ENCODE measurements at regions of chr2 and their contacts with region 1.

Region 1: DNA sequence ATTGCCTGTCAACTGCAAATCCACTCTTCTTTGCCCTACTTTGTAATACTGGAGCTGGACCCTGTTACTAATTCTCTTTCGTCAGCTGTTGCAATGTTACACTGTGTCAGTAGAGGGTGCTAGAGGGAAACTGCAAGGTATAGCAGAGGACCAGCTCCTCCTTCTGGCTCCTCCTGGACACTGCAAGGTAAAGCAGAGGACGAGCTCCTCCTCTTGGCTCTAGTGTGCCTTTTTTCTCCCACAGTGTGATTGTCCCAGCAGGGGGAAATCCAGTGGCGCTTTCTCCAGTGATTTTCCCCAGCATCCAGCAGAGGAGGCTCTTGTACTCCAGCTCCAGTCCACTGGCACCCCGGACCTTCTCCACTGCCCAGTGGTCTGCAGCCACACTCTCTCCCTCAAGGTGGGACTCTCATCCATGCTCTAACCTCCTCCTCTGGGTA is 95.6 kb downstream of the CAPN13 start:
- DNase-seq: peak; percentile 94
- H3K4me3 ChIP-seq: no peak overlapping the region
- H3K27ac ChIP-seq: no peak overlapping the region
- H3K4me1 ChIP-seq: no peaks in the 10 kb centered on the region
- H3K27me3 ChIP-seq: no peaks in the 10 kb centered on the region

Region 2: GRCh38 chr2:30165050-30165520 is 546.6 kb before region 1 on chr2:
- in situ Hi-C with region 1: loop called (anchors 10 kb)
- DNase-seq: peak; percentile 95
- H3K4me3 ChIP-seq: no peak overlapping the region
- H3K27ac ChIP-seq: no peak overlapping the region
- H3K4me1 ChIP-seq: peaks cover 9% of the 10 kb centered on the region; the same call in 1 of the 2 replicates
- H3K27me3 ChIP-seq: no peaks in the 10 kb centered on the region

Region 3: DNA sequence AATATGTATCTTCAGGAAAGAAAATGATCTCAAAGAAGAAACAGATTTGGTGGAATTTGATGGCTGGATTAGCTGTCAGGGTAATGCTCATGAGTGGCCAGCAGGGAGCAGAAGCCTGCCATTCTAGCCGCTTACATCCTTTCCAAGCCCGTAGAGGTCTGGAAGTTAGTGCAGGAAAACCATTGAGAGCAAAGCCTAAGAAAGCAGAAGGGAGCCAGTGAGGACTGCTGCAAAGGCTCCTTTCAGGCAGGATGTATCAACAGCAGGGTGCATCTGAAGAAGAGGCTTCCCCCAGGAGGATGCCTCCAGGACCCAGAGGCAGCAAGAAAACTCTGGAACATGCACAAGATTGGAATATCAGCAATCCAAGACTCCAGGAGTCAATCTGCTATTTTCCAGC is 503.2 kb before region 1 on chr2:
- in situ Hi-C with region 1: loop called (anchors 10 kb)
- DNase-seq: peak; percentile 87
- H3K4me3 ChIP-seq: no peak overlapping the region
- H3K27ac ChIP-seq: no peak overlapping the region
- H3K4me1 ChIP-seq: no peaks in the 10 kb centered on the region
- H3K27me3 ChIP-seq: no peaks in the 10 kb centered on the region

Region 4: DNA sequence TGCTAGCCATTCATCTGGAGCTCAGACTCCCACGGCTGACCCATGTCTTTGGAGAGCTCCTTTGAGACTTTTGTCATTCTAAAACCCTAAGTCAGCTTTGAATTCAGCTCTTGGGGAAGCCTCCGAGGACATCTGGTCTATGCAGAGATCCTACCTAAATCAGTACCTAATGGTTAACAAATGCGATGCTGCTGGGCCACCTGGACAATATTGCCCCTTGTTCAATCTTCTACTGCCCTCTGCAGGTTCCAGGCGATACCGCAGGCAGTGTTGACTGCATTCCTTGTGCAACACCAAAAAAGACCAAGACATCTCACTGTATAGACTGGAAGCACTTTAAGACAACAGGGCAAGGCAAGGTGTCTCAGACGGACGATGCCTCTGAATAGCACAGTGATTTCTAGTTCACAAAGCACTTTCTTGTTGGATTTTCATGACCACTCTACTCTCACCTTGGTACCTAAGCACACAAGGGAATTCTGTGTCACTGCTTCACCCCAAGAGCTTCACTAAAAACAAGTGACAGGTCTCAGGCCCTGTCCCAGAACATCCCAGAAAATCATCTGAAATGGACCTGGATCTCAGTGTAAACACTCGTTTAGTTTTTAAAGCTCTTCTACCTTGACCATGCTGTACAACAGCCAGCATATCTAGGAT is 622.0 kb after region 1 on chr2:
- in situ Hi-C with region 1: loop called (anchors 10 kb)
- DNase-seq: peak; percentile 84
- H3K4me3 ChIP-seq: no peak overlapping the region
- H3K27ac ChIP-seq: peak overlapping the region; percentile 79
- H3K4me1 ChIP-seq: peaks cover 48% of the 10 kb centered on the region
- H3K27me3 ChIP-seq: no peaks in the 10 kb centered on the region

Region 5: GRCh38 chr2:31729764-31730092 is 1018.1 kb after region 1 on chr2:
- in situ Hi-C with region 1: no loop called
- DNase-seq: peak; percentile 69
- H3K4me3 ChIP-seq: no peak overlapping the region
- H3K27ac ChIP-seq: no peak overlapping the region
- H3K4me1 ChIP-seq: no peaks in the 10 kb centered on the region
- H3K27me3 ChIP-seq: peaks cover 3% of the 10 kb centered on the region; the same call in 1 of the 2 replicates

Measured in GM23248 (cell line).